Gastrocnemius medialis (tissue), 4 donors: ENCODE measurements at regions of chrX and their contacts with region 1.

Region 1: DNA sequence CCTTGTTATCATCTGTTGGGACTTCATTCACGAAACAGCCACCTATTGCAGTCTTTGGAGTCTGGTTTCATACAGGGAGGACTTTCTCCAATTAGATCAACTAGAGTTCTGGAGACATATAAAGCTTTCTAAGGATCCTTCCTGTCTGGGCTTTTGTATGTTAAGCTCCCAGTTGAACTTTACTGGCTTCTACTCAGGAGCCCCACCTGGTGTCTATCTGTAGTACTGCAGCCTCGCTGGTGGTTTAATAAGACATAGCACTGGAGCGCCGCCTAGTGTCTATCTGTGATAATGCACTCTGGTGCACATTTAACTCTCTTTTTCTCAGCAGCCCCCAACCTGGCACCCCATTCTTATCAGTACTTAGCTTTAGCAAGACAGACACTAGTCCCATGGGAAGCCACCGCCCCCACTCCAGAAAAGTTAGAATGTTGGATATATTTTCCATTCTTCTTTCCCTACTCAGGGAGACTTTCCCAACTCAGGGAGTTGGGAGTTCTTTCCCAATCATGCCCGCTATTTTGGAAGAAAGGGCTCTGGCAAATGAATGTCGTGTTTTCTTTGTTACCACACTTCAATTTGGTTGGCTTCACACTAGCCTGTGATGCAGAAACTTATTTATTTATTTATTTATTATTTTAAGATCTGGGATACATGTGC is 36.9 kb upstream of the SYTL4 start:
- DNase-seq: peak; percentile 13 to 55
- ATAC-seq: no peak
- H3K4me3 ChIP-seq: no peak overlapping the region
- H3K27ac ChIP-seq: no peak overlapping the region
- H3K4me1 ChIP-seq: no peaks in the 10 kb centered on the region
- H3K27me3 ChIP-seq: peaks cover 0 to 3% (median 0%) of the 10 kb centered on the region in 3 donors
- CTCF ChIP-seq: peak; percentile 79 to 89 (median 86)
- POLR2A ChIP-seq: no peak

Region 2: GRCh38 chrX:100685284-100685996 is 83.4 kb before region 1 on chrX:
- in situ Hi-C with region 1: loop called in 3 of 4 experiments (anchors 5 to 10 kb)
- intact Hi-C with region 1: loop called (anchors 1 kb)
- DNase-seq: peak in 1 of 2 donors; percentile 30
- ATAC-seq: peak; percentile 62 to 75
- H3K4me3 ChIP-seq: no peak overlapping the region
- H3K27ac ChIP-seq: peak overlapping the region in 1 of 4 donors; percentile 27
- H3K4me1 ChIP-seq: no peaks in the 10 kb centered on the region
- H3K27me3 ChIP-seq: no peaks in the 10 kb centered on the region
- CTCF ChIP-seq: peak; percentile 61 to 75 (median 75)
- POLR2A ChIP-seq: no peak

Region 3: GRCh38 chrX:100797359-100797758 is 28.6 kb after region 1 on chrX:
- in situ Hi-C with region 1: no loop called
- intact Hi-C with region 1: no loop called
- DNase-seq: no peak
- ATAC-seq: no peak
- H3K4me3 ChIP-seq: no peak overlapping the region
- H3K27ac ChIP-seq: no peak overlapping the region
- H3K4me1 ChIP-seq: no peaks in the 10 kb centered on the region
- H3K27me3 ChIP-seq: no peaks in the 10 kb centered on the region
- CTCF ChIP-seq: no peak
- POLR2A ChIP-seq: no peak